ENCODE measurements at regions of chr10 and their contacts with region 1.

Region 1: GRCh38 chr10:103888113-103888841 is 29.7 kb downstream of the STN1 start:
- DNase-seq: peak; percentile 83
- ATAC-seq: peak; percentile 31
- H3K4me3 ChIP-seq: no peak overlapping the region
- H3K27ac ChIP-seq: peak overlapping the region; percentile 100
- H3K4me1 ChIP-seq: peaks cover 51% of the 10 kb centered on the region
- H3K27me3 ChIP-seq: no peaks in the 10 kb centered on the region
- CTCF ChIP-seq: peak; percentile 87

Region 2: GRCh38 chr10:103712570-103713498 is 175.4 kb before region 1 on chr10:
- CTCF ChIA-PET with region 1: interaction called, 4 read pairs
- POLR2A ChIA-PET with region 1: no interaction called
- intact Hi-C with region 1: loop called (anchors 1 kb)
- DNase-seq: peak; percentile 89
- ATAC-seq: peak; percentile 45
- H3K4me3 ChIP-seq: no peak overlapping the region
- H3K27ac ChIP-seq: no peak overlapping the region
- H3K4me1 ChIP-seq: peaks cover 49% of the 10 kb centered on the region
- H3K27me3 ChIP-seq: no peaks in the 10 kb centered on the region
- CTCF ChIP-seq: peak; percentile 86

Region 3: DNA sequence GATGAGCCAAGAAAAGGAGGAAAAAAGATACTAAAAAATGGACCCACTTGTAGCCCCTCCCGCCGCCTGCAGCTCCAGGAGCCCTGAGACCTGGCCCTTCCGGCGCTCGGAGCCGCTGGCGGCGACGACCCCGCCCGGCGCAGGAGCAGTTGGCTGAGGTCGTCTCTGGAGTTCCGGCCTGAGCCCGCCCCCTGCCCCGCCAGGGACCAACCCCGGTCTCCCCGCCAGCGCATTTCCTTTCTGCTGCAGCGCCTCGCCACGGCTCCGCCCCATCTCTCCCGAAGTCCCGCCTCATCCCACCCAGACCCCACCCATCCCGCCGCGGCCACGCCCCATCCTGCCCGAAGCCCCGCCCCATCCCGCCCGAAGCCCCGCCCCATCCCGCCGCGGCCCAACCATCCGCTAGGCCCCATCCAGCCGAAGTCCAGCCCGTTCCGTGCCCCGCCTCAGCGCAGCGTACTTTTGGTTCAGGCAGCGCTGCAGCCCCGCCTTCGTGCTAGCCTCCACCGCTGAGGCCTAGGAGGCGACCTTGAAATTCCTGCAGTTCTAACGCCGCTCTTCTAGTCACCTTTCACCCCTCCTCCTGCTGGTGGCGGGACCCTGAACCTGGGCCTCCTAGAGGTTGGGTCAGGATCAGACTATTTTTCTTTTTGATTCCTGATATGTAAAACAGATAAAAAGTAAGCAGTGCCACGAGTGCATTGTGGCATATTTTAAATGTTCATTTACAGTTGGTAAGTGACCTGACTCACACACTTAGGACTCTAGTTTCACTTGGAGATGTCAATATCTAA is 30.0 kb after region 1 on chr10 and contains the start of gene STN1:
- CTCF ChIA-PET with region 1: interaction called, 18 read pairs
- POLR2A ChIA-PET with region 1: interaction called, 4 read pairs
- intact Hi-C with region 1: no loop called
- DNase-seq: peak; percentile 90
- ATAC-seq: peak; percentile 90
- H3K4me3 ChIP-seq: peak within 1 kb of the TSS; percentile 72
- H3K27ac ChIP-seq: peak within 1 kb of the TSS; percentile 89
- H3K4me1 ChIP-seq: peaks cover 32% of the 10 kb centered on the region
- H3K27me3 ChIP-seq: no peaks in the 10 kb centered on the region
- CTCF ChIP-seq: no peak
- total RNA-seq, gene STN1: 20.0 and 33.5 TPM in 2 replicates

Region 4: GRCh38 chr10:103929381-103929921 is 41.2 kb after region 1 on chr10:
- CTCF ChIA-PET with region 1: no interaction called
- POLR2A ChIA-PET with region 1: no interaction called
- intact Hi-C with region 1: no loop called
- DNase-seq: no peak
- ATAC-seq: no peak
- H3K4me3 ChIP-seq: no peak overlapping the region
- H3K27ac ChIP-seq: no peak overlapping the region
- H3K4me1 ChIP-seq: no peaks in the 10 kb centered on the region
- H3K27me3 ChIP-seq: no peaks in the 10 kb centered on the region
- CTCF ChIP-seq: no peak

Region 5: DNA sequence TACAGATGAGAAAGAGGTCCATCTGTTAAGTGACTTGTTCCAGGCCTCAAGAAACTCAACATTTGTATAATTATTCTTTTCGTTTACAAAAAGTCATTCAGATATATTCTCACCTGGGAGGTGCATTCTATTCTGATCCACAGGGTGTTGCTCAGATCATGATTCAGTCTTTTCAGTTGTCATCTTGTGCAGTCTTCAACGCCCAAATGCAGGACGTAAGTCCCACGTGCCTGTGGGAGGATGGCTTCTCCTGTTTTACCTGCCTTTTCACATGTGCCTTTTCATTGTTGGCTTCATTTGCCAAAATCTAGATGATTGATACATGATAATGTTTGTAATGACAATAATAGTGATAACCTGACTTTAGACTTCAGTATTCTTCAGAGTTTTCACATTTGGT is 125.2 kb after region 1 on chr10:
- CTCF ChIA-PET with region 1: interaction called, 3 read pairs
- POLR2A ChIA-PET with region 1: interaction called, 17 read pairs
- intact Hi-C with region 1: no loop called
- DNase-seq: no peak
- ATAC-seq: no peak
- H3K4me3 ChIP-seq: no peak overlapping the region
- H3K27ac ChIP-seq: no peak overlapping the region
- H3K4me1 ChIP-seq: peaks cover 7% of the 10 kb centered on the region; the same call in 1 of the 2 replicates
- H3K27me3 ChIP-seq: no peaks in the 10 kb centered on the region
- CTCF ChIP-seq: no peak

Region 6: DNA sequence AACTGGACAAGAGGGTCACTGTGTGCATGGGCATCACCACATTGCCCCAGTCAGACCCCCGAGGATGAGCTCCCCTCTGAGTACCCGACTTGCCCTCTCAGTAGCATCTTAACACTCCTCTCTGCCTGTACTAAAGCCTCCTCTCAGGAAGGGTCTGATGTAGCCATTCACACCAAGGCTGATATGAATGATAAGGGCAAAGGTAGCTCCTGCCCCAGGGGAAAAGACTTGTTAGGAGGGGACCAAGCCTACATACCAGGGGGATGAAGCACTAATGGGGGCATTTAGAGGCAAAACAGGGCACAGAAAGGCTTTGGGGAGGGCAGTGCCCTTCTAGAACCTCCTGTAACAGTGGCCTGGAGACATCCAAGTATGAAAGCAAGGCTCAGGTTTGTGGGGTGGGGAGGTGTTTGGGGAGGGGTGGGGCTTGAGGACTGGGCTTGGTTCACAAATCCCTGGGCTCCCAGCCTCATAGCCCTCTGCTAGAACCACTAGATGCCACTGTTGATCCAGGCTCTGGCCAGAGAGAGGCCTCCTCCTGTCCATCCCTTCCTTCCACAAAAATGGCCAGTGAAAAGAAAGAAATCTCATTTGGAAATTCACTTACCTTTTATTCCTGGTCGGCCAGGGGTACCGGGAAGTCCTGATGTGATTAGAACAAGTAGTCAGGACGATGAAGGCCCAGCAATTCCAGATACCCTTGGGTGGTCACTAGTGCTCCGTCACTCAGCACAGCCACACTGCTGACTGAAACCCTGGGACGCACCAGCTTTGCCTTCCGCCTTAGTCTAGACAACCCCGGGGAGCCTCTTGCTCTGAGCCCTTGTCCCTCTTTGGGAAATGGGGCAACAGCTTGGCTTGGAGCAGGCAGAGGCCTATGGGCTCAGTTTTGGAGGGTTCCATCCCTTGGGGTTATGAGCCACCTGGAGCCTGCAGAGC is 157.1 kb after region 1 on chr10:
- CTCF ChIA-PET with region 1: no interaction called
- POLR2A ChIA-PET with region 1: no interaction called
- intact Hi-C with region 1: loop called (anchors 1 kb)
- DNase-seq: peak; percentile 80
- ATAC-seq: peak; percentile 87
- H3K4me3 ChIP-seq: no peak overlapping the region
- H3K27ac ChIP-seq: no peak overlapping the region
- H3K4me1 ChIP-seq: peaks cover 18% of the 10 kb centered on the region
- H3K27me3 ChIP-seq: no peaks in the 10 kb centered on the region
- CTCF ChIP-seq: peak; percentile 70

Measured in PC-3 (cell line).